ENCODE measurements at regions of chr1 and their contacts with region 1.

Region 1: DNA sequence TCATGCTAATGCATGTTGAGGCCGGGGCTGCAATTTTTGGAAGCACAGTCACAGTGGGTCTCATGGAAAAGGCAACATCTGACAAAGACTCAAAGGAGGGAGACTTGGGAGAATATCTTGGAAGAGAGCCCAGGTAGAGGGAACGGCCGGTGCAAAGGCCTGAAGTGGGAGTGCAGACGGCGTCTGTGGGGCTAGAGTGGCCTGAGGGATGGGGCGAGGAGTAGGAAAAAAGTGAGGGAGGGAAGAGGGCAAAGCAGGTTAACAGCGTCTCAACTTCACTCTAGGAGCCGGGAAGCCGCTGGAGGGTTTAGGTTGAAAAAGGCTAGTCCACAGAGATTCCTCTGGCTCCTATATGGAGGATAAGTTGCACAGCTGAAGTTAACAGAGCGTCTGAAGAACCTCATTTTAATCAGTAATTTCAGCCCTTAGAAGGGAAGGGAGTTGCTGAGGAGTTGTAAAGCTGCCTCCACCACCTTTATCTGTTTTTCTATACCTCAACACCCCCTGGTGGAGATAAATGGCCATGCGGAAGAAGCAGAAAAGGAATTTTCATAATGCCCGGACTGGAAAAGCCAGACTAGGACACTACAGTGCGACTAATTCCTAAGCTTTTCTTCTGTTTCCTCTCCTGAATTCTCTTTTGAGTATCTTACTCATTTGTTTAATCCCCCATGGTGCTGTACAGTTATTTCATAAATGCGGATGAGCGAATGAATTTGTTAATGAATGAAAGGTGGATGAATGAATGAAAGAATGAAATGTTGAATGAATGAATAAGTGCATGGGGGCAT is 78.7 kb upstream of the ZNF281 start:
- DNase-seq: peak; percentile 68
- ATAC-seq: peak; percentile 84
- H3K4me3 ChIP-seq: no peak overlapping the region
- H3K27ac ChIP-seq: no peak overlapping the region
- H3K4me1 ChIP-seq: peaks cover 12% of the 10 kb centered on the region
- H3K27me3 ChIP-seq: no peaks in the 10 kb centered on the region
- CTCF ChIP-seq: peak; percentile 86
- EP300 ChIP-seq: no peak
- POLR2A ChIP-seq: no peak
- RAD21 ChIP-seq: peak; percentile 86

Region 2: GRCh38 chr1:199954699-199955098 is 533.9 kb before region 1 on chr1:
- CTCF ChIA-PET with region 1: interaction called, 3 read pairs
- POLR2A ChIA-PET with region 1: no interaction called
- in situ Hi-C with region 1: no loop called
- intact Hi-C with region 1: loop called (anchors 10 kb)
- DNase-seq: peak; percentile 10
- ATAC-seq: peak; percentile 99
- H3K4me3 ChIP-seq: no peak overlapping the region
- H3K27ac ChIP-seq: no peak overlapping the region
- H3K4me1 ChIP-seq: no peaks in the 10 kb centered on the region
- H3K27me3 ChIP-seq: no peaks in the 10 kb centered on the region
- CTCF ChIP-seq: peak; percentile 72
- EP300 ChIP-seq: no peak
- POLR2A ChIP-seq: no peak
- RAD21 ChIP-seq: no peak

Region 3: DNA sequence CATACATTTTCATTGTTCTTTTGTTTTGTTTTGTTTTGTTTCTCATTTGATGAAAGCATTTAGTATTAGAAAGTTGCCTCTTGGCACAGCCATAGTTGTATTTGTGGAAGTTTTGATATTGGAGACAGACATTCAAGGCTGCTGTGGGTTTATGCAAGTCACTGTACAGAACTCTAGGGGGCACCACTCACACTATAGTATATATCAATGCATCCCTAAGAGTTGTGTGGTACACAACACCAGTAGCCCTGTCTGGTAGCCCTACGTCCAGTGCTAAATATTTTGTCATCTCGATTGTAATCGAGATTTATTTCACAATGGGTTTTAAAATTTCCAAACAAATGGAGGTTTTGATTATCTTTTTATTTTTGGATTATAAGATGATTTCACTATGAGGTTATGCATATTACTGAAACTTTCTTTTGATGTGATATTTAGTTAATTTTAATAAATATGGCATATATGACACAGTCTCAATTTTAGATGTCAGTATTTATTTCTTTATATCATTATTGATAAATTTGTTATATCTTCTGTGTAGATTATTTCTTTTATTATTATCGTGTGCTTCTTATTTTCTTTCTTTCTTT is 348.8 kb before region 1 on chr1:
- CTCF ChIA-PET with region 1: interaction called, 10 read pairs
- POLR2A ChIA-PET with region 1: no interaction called
- in situ Hi-C with region 1: no loop called
- intact Hi-C with region 1: loop called (anchors 1 kb)
- DNase-seq: peak; percentile 61
- ATAC-seq: peak; percentile 94
- H3K4me3 ChIP-seq: no peak overlapping the region
- H3K27ac ChIP-seq: no peak overlapping the region
- H3K4me1 ChIP-seq: no peaks in the 10 kb centered on the region
- H3K27me3 ChIP-seq: no peaks in the 10 kb centered on the region; a peak in 1 of 5 replicates
- CTCF ChIP-seq: peak; percentile 73
- EP300 ChIP-seq: no peak
- POLR2A ChIP-seq: no peak
- RAD21 ChIP-seq: 0 out of 2 replicates have a peak, but pooled peaks have one; percentile 17

Region 4: GRCh38 chr1:200314085-200314750 is 174.4 kb before region 1 on chr1:
- CTCF ChIA-PET with region 1: no interaction called
- POLR2A ChIA-PET with region 1: no interaction called
- in situ Hi-C with region 1: no loop called
- intact Hi-C with region 1: loop called (anchors 1 kb)
- DNase-seq: peak; percentile 91
- ATAC-seq: peak; percentile 98
- H3K4me3 ChIP-seq: peak overlapping the region in 2 of 3 experiments; percentile 52 to 63; a peak in 5 of 6 replicates
- H3K27ac ChIP-seq: peak overlapping the region; percentile 93
- H3K4me1 ChIP-seq: peaks cover 50% of the 10 kb centered on the region
- H3K27me3 ChIP-seq: no peaks in the 10 kb centered on the region
- CTCF ChIP-seq: no peak
- EP300 ChIP-seq: peak in 1 of 2 experiments; percentile 4; a peak in 1 of 4 replicates
- POLR2A ChIP-seq: peak in 1 of 2 experiments; percentile 39; a peak in 1 of 4 replicates
- RAD21 ChIP-seq: no peak

Measured in HepG2 (cell line).